Sciatic nerve (tissue), 2 donors: ENCODE measurements at regions of chr1 and their contacts with region 1.

Region 1: DNA sequence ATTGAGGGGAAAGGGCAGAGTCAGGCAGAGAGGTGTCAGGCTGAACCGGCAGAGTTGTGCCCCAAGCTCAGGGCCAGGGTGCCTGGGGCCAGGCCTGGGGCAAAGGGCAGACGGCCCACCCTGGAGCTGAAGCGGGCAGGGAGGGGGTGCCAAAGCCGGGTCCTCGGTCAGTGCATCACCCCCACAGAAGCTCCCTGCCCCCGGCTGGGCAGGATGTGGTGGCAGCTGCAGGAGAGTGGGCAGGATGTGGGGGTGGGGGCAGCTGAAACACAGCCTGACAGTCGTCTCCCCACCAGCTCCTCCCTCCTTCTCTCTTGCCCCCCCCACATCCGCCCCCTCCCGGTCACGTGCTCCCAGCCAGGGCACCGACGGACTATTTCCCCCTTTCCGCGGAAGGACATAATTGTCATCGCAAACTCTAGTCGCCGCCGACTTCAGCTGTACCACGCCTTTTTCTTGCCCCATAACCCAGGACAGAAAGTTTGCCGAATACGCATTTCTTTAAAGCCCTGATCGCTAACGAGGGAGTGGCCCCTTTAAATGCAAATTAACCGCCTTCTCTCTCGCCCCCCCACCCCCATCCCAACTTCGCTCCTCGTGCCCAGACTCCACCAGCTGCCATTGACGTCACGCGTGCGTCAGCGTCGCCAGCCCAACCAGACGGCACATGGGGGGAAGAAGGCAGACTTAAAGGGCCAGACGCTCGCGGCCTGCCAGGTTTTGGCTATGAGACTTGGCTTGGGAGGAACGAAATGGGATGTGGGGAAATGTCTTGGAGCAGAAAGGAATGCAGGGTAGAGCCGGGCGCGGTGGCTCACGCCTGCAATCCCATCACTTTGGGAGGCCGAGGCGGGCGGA is 4.5 kb upstream of the MEF2D start:
- DNase-seq: peak; percentile 100
- ATAC-seq: peak; percentile 88

Region 2: DNA sequence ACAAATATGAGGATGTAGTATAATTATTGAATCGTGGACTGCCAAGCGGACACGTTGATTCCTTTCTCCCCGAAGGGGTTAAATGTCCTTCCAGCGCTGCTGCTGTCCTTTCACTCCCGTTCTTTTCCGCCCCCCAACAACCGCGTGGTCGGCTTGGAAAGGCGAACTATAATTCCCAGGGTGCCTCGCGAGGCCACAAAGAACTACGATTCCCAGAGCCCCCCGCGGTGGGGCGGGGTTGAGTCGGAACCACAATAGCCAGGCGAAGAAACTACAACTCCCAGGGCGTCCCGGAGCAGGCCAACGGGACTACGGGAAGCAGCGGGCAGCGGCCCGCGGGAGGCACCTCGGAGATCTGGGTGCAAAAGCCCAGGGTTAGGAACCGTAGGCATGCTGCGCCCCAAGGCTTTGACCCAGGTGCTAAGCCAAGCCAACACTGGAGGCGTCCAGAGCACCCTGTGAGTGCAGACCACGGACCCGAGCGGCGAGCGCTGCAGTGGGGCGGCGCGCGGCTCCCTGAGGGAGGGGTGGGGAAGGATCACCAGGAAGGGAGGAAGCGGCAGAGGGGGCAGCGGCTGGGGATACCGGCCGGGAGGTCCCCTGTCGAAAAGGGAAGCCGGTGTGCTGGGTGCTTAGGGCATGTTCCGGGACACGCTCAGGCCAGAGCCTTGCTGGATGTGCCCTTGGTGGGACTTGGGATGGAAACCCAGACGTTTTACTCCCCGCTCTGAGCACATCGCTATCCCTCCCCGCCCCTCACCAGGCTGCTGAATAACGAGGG is 450.4 kb before region 1 on chr1 and contains the start of gene LAMTOR2:
- intact Hi-C with region 1: no loop called
- DNase-seq: peak; percentile 99
- ATAC-seq: peak; percentile 95
- total RNA-seq, gene LAMTOR2: 35.8 TPM

Region 3: GRCh38 chr1:156456622-156457465 is 48.2 kb before region 1 on chr1:
- intact Hi-C with region 1: loop called (anchors 5 kb)
- DNase-seq: peak; percentile 98
- ATAC-seq: peak; percentile 96